PC-9 (cell line): ENCODE measurements at regions of chr3 and their contacts with region 1.

Region 1: DNA sequence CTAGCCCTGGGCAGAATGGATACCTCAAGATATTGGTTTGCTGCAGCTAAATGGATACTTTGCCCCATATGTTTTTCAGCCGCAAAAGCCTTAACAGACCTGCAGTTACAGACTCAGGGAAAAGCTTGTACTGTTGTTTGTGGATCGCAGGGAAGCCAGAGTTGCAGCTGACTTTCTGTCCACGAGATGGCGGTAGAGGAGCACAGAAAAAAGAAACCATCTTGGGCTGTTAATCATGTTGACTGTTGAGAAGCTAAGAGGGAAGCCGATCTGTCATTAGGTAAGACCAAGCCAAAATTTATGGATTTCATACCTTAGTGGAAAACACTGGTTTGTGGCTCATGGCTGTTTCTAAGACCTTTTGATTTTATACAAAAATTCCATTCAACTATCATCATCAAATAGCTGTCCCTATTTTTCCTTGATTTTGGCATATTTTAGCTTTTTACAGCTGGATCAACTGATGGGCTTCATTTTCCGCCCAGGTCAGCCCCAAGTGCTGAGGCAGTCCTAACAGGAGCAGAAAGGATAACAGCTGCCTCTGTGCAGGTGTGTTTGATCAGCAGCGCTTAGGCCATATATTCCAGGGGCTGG is 205.7 kb upstream of the ZPLD1 start:
- DNase-seq: peak; percentile 77 to 87
- H3K4me3 ChIP-seq: no peak overlapping the region
- H3K27ac ChIP-seq: no peak overlapping the region
- H3K4me1 ChIP-seq: no peaks in the 10 kb centered on the region
- H3K27me3 ChIP-seq: no peaks in the 10 kb centered on the region
- CTCF ChIP-seq: peak; percentile 100

Region 2: DNA sequence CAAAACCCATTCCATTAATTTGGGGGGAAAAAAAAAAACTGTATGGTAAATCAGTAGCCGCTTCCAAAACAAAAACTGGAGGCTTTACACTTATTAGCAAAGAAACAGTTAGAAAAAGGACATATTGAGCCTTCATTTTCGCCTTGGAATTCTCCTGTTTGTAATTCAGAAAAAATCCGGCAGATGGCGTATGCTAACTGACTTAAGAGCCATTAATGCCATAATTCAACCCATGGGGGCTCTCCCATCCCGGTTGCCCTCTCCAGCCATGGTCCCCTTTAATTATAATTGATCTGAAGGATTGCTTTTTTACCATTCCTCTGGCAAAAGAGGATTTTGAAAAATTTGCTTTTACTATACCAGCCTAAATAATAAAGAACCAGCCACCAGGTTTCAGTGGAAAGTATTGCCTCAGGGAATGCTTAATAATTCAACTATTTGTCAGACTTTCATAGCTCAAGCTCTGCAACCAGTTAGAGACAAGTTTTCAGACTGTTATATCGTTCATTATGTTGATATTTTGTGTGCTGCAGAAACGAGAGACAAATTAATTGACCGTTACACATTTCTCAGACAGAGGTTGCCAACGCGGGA is 533.3 kb before region 1 on chr3:
- CTCF ChIA-PET with region 1: no interaction called
- POLR2A ChIA-PET with region 1: no interaction called
- intact Hi-C with region 1: loop called (anchors 1 kb)
- DNase-seq: peak; percentile 47 to 67
- H3K4me3 ChIP-seq: no peak overlapping the region
- H3K27ac ChIP-seq: no peak overlapping the region
- H3K4me1 ChIP-seq: no peaks in the 10 kb centered on the region
- H3K27me3 ChIP-seq: no peaks in the 10 kb centered on the region
- CTCF ChIP-seq: peak; percentile 99

Region 3: DNA sequence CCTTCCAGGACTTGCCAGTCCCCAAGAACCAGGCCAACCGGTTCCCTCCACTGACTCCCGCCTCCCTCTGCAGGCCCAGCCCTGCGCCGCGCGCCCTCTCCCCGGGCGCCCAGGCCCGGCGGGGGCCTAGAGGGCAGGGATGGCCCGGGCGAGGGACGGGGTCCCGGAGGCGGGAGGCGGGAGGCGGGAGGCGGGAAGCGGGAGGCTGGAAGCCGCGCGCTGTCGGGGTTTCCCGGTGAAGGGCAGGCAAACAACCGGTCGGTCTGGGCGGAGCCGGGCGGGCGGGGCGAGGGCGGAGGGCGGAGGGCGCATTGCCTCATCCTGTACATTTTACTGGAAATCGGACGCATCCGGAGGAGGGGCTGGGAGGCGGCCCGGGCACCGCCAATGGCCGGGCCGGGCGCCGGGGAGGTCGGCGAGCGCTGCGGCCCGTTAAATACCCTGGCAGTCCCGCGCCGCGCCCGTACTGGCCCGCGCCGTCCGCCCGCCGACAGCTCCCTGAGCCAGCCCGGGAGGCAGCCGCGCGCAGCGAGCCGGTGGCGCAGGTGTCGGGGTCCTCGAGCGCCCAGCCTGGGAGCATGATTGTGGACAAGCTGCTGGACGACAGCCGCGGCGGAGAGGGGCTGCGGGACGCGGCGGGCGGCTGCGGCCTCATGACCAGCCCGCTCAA is 380.0 kb before region 1 on chr3 and contains the start of gene NFKBIZ:
- CTCF ChIA-PET with region 1: interaction called, 4 read pairs
- POLR2A ChIA-PET with region 1: interaction called, 3 read pairs
- intact Hi-C with region 1: loop called (anchors 1 kb)
- DNase-seq: peak; percentile 91 to 99
- H3K4me3 ChIP-seq: peak within 1 kb of the TSS; percentile 88
- H3K27ac ChIP-seq: peak within 1 kb of the TSS; percentile 80
- H3K4me1 ChIP-seq: peaks cover 24% of the 10 kb centered on the region
- H3K27me3 ChIP-seq: no peaks in the 10 kb centered on the region
- CTCF ChIP-seq: no peak
- total RNA-seq, gene NFKBIZ: 44.9 and 57.7 TPM in 2 replicates

Region 4: DNA sequence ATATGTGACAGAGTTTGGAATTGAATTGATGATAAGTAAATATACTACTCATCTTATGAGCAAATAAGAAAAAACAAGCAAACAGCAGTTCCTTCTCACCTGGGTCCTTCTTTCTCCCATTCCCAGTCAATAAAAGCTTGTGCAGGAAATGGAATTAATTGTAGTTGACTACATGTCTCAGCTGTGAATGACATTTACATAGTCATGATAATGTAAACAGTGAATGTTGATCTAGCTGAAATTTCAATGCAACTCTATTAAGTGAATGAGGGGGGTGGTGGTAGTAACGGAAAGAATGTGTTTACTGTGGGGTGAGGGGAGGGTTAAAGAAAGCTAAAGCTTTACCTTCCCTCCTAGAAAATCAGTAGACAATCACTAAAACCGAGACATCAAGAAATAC is 303.6 kb before region 1 on chr3:
- CTCF ChIA-PET with region 1: no interaction called
- POLR2A ChIA-PET with region 1: no interaction called
- intact Hi-C with region 1: no loop called
- DNase-seq: peak in 1 of 2 experiments; percentile 84
- H3K4me3 ChIP-seq: no peak overlapping the region
- H3K27ac ChIP-seq: no peak overlapping the region
- H3K4me1 ChIP-seq: peaks cover 21% of the 10 kb centered on the region
- H3K27me3 ChIP-seq: no peaks in the 10 kb centered on the region
- CTCF ChIP-seq: no peak

Region 5: GRCh38 chr3:102180291-102181039 is 48.7 kb before region 1 on chr3:
- CTCF ChIA-PET with region 1: interaction called, 6 read pairs
- POLR2A ChIA-PET with region 1: interaction called, 7 read pairs
- intact Hi-C with region 1: loop called (anchors 1 kb)
- DNase-seq: no peak
- H3K4me3 ChIP-seq: no peak overlapping the region
- H3K27ac ChIP-seq: no peak overlapping the region
- H3K4me1 ChIP-seq: peaks cover 18% of the 10 kb centered on the region
- H3K27me3 ChIP-seq: no peaks in the 10 kb centered on the region
- CTCF ChIP-seq: no peak

Region 6: DNA sequence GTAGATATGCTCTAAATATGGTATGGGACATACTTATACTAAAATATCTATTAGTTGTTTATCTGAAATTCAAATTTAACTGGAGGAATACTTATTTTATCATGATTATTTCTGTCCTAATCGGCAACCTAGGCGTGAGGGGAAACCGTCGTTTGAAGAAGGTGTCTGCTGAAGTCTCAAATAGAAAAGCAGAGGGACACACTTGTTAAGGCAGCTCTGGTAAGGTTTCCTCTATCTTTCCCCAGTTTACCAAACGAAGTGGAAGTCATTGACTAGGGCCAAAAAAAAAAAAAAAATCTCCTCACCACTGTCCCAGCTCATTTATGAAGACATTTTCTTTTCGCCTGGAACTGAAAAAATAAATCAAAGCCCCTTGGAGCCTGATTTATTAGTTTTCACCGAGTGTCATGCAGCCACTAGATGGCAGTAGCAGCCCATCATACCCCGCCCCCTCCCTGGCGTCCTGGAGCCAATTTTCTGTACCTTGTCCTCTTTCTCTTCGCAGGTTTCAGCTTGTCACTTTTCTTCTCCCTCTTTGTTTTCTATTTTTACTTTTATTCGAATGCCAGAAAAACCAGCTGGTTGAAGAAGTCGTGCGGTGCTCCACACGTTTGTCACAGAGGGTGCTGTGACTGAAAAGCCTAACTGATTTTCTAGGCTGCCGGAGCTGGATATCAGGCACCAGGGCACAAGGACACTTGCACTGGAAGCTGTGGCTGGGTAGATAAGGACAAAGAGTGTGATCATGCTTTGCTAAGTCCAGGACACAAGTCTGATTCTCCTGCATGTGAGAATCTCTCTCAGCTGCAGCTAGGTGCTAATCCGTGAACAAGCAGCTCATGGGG is 444.3 kb after region 1 on chr3:
- CTCF ChIA-PET with region 1: interaction called, 8 read pairs
- POLR2A ChIA-PET with region 1: no interaction called
- intact Hi-C with region 1: loop called (anchors 1 kb)
- DNase-seq: peak; percentile 46 to 78
- H3K4me3 ChIP-seq: peak overlapping the region; percentile 6; the same call in 1 of the 2 replicates
- H3K27ac ChIP-seq: no peak overlapping the region
- H3K4me1 ChIP-seq: no peaks in the 10 kb centered on the region
- H3K27me3 ChIP-seq: no peaks in the 10 kb centered on the region
- CTCF ChIP-seq: peak; percentile 99